ENCODE measurements at regions of chr10 and their contacts with region 1.

Region 1: GRCh38 chr10:24701447-24701846 is 22.2 kb downstream of the ARHGAP21 start:
- DNase-seq: no peak
- H3K4me3 ChIP-seq: no peak overlapping the region
- H3K4me3 Mint-ChIP-seq: no peak overlapping the region
- H3K27ac Mint-ChIP-seq: no peak overlapping the region
- H3K4me1 ChIP-seq: peaks cover 38% of the 10 kb centered on the region
- H3K4me1 Mint-ChIP-seq: peaks cover 43% of the 10 kb centered on the region
- H3K27me3 ChIP-seq: no peaks in the 10 kb centered on the region
- H3K27me3 Mint-ChIP-seq: no peaks in the 10 kb centered on the region
- CTCF ChIP-seq: peak in 1 of 2 experiments; percentile 2

Region 2: GRCh38 chr10:24718031-24718855 is 16.8 kb after region 1 on chr10:
- CTCF ChIA-PET with region 1: no interaction called
- POLR2A ChIA-PET with region 1: interaction called, 3 read pairs
- intact Hi-C with region 1: loop called (anchors 2 kb)
- DNase-seq: peak in 1 of 2 experiments; percentile 29
- H3K4me3 ChIP-seq: no peak overlapping the region
- H3K4me3 Mint-ChIP-seq: no peak overlapping the region
- H3K27ac Mint-ChIP-seq: no peak overlapping the region
- H3K4me1 ChIP-seq: peaks cover 43% of the 10 kb centered on the region
- H3K4me1 Mint-ChIP-seq: peaks cover 9% of the 10 kb centered on the region
- H3K27me3 ChIP-seq: no peaks in the 10 kb centered on the region
- H3K27me3 Mint-ChIP-seq: no peaks in the 10 kb centered on the region
- CTCF ChIP-seq: no peak